Adrenal gland (tissue), 19 donors: ENCODE measurements at regions of chr1 and their contacts with region 1.

Region 1: GRCh38 chr1:211323156-211324063 is 3.2 kb upstream of the TRAF5 start:
- DNase-seq: peak; percentile 41 to 82 (median 55)
- H3K4me3 ChIP-seq: no peak overlapping the region
- H3K27ac ChIP-seq: no peak overlapping the region
- H3K4me1 ChIP-seq: peaks cover 5 to 11% of the 10 kb centered on the region in 2 donors
- H3K27me3 ChIP-seq: no peaks in the 10 kb centered on the region
- CTCF ChIP-seq: peak; percentile 53 to 76 (median 72)
- POLR2A ChIP-seq: no peak

Region 2: DNA sequence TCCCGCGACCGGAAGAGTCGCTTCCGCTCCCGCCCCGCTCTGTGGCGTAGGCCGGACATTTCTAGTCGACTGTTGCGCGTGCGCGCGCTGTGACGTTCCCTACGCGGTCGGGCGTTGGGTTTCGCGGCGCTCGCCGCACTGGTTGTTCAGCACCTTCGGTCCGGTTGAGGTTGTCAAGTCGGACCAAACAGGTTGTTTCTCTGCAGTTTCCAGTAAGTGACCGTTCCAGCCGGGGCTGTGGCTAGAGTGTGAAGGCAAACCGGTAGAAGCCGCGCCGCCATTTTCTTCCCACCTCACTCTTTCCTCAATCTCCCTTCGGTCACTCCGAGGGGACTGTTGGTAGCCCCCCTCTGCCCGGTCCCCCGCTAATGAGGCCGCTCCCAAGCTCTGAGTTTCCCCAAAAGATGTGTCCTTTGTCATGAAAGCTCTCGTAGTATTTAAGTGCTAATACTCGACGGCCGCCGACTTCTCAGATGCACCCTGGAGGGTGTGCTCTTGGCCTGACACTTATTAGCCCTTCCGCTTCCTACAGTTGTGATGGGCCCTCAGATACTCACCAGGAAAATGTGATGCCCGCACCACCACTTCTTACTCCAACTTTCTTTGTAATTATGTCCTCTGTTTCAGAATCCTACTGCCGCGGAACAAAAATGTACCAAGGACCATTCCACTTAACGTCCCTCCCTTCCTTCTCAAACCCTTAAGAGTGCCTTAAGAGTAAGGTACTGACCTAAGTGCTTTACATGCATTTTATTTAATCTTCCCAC is 59.5 kb after region 1 on chr1:
- intact Hi-C with region 1: loop called in 1 of 2 experiments (anchors 10 kb)
- DNase-seq: peak; percentile 93 to 97 (median 94)
- H3K4me3 ChIP-seq: peak overlapping the region; percentile 27 to 61 (median 58)
- H3K27ac ChIP-seq: peak overlapping the region; percentile 73 to 96 (median 92)
- H3K4me1 ChIP-seq: peaks cover 6 to 7% of the 10 kb centered on the region in 2 donors
- H3K27me3 ChIP-seq: no peaks in the 10 kb centered on the region
- CTCF ChIP-seq: no peak
- POLR2A ChIP-seq: peak; percentile 89 to 90

Region 3: DNA sequence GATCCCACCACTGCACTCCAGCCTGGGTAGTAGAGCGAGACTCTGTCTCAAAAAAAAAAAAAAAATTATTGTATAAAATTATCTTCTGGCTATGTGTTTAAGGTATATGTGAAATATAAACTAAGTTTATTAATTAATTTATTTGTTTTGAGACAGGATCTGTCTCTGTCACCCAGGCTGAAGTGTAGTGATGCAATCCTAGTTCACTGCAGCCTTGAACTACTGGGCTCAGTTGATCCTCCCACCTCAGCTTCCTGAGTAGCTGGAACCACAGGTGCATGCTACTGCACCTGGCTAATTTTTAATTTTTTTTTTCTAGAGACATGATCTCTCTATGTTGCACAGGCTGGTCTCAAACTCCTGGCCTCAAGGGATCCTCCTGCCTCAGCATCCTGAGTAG is 100.6 kb after region 1 on chr1:
- intact Hi-C with region 1: no loop called
- DNase-seq: no peak
- H3K4me3 ChIP-seq: no peak overlapping the region
- H3K27ac ChIP-seq: no peak overlapping the region
- H3K4me1 ChIP-seq: no peaks in the 10 kb centered on the region
- H3K27me3 ChIP-seq: no peaks in the 10 kb centered on the region
- CTCF ChIP-seq: no peak
- POLR2A ChIP-seq: no peak

Region 4: GRCh38 chr1:211738691-211739301 is 415.4 kb after region 1 on chr1:
- intact Hi-C with region 1: no loop called
- DNase-seq: no peak
- H3K4me3 ChIP-seq: no peak overlapping the region
- H3K27ac ChIP-seq: no peak overlapping the region
- H3K4me1 ChIP-seq: peaks cover 14 to 25% of the 10 kb centered on the region in 2 donors
- H3K27me3 ChIP-seq: no peaks in the 10 kb centered on the region
- CTCF ChIP-seq: no peak
- POLR2A ChIP-seq: no peak